ENCODE measurements at regions of chr17 and their contacts with region 1.

Region 1: DNA sequence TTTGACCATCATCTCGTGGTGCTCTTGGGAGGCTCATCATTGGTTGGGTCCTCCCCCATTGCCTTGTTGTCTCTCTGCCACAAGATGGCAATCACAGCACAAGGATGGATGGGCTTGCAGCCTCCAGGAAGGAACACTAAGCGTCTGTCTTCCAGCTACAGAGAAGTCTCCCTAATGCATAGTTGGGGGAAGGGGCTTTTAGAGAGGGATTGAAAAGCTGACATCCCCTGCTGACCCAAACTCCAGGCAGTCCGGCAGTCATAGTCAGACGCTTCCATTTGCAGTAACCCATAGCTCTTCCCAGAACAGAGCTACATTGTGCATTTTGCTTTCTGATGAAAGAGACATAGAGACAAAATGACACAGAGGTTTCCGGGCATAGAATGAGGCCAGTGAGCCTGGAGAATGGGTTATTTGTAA is 111.4 kb downstream of the UTP18 start:
- DNase-seq: no peak
- H3K4me3 ChIP-seq: no peak overlapping the region
- H3K27ac ChIP-seq: no peak overlapping the region
- H3K27me3 ChIP-seq: no peaks in the 10 kb centered on the region
- CTCF ChIP-seq: peak; percentile 54

Region 2: DNA sequence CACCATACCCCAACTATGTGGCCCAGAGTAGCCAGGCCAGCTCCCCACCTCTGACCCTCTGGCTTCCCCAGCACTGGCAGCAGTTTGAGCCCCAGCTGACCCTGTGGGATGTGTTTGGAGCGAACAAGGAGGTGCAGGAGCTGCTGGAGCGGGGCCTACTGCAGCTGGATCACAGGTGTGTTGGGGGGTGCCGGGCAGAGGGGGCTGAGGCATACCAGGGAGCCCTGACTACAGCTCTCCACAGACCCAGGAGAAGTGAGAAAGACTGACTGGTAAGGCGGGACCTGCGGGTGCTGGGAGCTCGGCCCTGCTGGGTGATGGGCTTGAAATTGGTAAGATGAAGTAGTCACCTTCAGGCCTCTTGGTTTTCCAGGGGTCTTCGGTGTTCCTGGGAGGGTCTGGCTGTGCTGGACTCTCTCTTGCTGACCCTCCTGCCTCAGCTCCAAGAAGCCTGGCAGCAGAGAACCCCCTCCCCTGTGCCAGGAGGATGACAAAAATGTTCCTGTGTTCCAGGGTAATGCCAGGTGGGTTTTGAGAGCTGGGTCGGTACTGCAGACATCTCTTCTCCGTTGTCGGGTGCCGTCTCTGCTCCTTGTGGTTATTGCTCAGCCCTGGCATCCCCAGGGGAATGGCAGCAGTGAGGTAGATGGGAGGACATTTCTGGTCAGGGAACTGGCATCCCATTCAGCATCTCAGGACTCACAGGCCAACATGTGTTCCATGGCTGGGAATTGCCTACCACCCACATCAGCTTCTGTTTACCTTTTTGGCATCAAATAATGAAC is 887.2 kb before region 1 on chr17:
- CTCF ChIA-PET with region 1: interaction called, 15 read pairs
- POLR2A ChIA-PET with region 1: no interaction called
- DNase-seq: no peak
- H3K4me3 ChIP-seq: no peak overlapping the region
- H3K27ac ChIP-seq: no peak overlapping the region
- H3K27me3 ChIP-seq: no peaks in the 10 kb centered on the region
- CTCF ChIP-seq: no peak

Region 3: GRCh38 chr17:51397361-51398127 is 25.8 kb after region 1 on chr17:
- CTCF ChIA-PET with region 1: no interaction called
- POLR2A ChIA-PET with region 1: no interaction called
- DNase-seq: no peak
- H3K4me3 ChIP-seq: no peak overlapping the region
- H3K27ac ChIP-seq: no peak overlapping the region
- H3K27me3 ChIP-seq: no peaks in the 10 kb centered on the region
- CTCF ChIP-seq: no peak